Ovary (tissue), 10 donors: ENCODE measurements at regions of chr14 and their contacts with region 1.

Region 1: GRCh38 chr14:74362361-74362915 is 14.2 kb downstream of the VRTN start:
- DNase-seq: peak; percentile 73 to 82 (median 76)
- H3K4me3 ChIP-seq: no peak overlapping the region
- H3K27ac ChIP-seq: no peak overlapping the region
- H3K4me1 ChIP-seq: no peaks in the 10 kb centered on the region
- H3K27me3 ChIP-seq: no peaks in the 10 kb centered on the region
- CTCF ChIP-seq: peak; percentile 75 to 84 (median 77)
- EP300 ChIP-seq: no peak
- POLR2A ChIP-seq: no peak

Region 2: GRCh38 chr14:74089251-74090020 is 273.0 kb before region 1 on chr14:
- intact Hi-C with region 1: no loop called
- DNase-seq: no peak
- H3K4me3 ChIP-seq: no peak overlapping the region
- H3K27ac ChIP-seq: no peak overlapping the region
- H3K4me1 ChIP-seq: peaks cover 2% of the 10 kb centered on the region
- H3K27me3 ChIP-seq: no peaks in the 10 kb centered on the region
- CTCF ChIP-seq: no peak
- EP300 ChIP-seq: no peak
- POLR2A ChIP-seq: no peak

Region 3: GRCh38 chr14:74478996-74479635 is 116.7 kb after region 1 on chr14:
- intact Hi-C with region 1: loop called in 1 of 4 experiments (anchors 10 kb)
- DNase-seq: no peak
- H3K4me3 ChIP-seq: no peak overlapping the region
- H3K27ac ChIP-seq: no peak overlapping the region
- H3K4me1 ChIP-seq: no peaks in the 10 kb centered on the region
- H3K27me3 ChIP-seq: no peaks in the 10 kb centered on the region
- CTCF ChIP-seq: no peak
- EP300 ChIP-seq: no peak
- POLR2A ChIP-seq: no peak

Region 4: DNA sequence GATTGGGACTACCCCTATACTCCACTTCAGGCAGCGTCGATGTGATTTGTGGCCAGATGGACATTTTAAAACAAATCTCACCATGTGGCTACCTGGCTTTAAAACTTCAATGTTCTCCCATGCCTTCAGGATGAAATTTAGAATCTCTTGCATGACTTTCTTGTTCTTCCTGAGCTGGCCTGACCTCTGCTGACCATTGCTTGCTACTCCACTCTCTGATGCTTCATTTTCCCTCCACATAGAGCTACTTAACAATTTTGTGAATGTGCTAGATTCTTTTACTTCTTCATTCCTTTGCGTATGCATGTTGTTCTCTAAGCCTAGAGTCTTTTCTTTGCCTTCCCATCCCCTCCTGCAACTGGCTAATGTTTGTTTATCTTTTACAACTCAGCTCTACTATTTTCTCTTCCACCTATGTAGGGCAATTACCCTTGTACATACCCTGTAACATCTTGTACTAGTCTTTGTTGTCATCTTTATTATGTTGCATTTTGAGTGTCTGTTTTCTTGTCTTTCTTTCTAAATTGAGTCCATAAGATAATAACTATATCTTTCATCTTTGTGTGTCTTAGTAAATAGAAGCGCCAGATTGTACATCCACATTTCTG is 441.9 kb after region 1 on chr14:
- intact Hi-C with region 1: loop called in 1 of 4 experiments (anchors 10 kb)
- DNase-seq: peak in 4 of 5 donors; percentile 16 to 53 (median 32)
- H3K4me3 ChIP-seq: no peak overlapping the region
- H3K27ac ChIP-seq: no peak overlapping the region
- H3K4me1 ChIP-seq: no peaks in the 10 kb centered on the region
- H3K27me3 ChIP-seq: no peaks in the 10 kb centered on the region
- CTCF ChIP-seq: peak; percentile 24 to 26 (median 24)
- EP300 ChIP-seq: no peak
- POLR2A ChIP-seq: no peak

Region 5: GRCh38 chr14:74905375-74906142 is 543.1 kb after region 1 on chr14:
- intact Hi-C with region 1: loop called in 1 of 4 experiments (anchors 10 kb)
- DNase-seq: peak; percentile 70 to 84 (median 81)
- H3K4me3 ChIP-seq: no peak overlapping the region
- H3K27ac ChIP-seq: no peak overlapping the region
- H3K4me1 ChIP-seq: no peaks in the 10 kb centered on the region
- H3K27me3 ChIP-seq: no peaks in the 10 kb centered on the region
- CTCF ChIP-seq: peak; percentile 70 to 87 (median 77)
- EP300 ChIP-seq: no peak
- POLR2A ChIP-seq: no peak